ENCODE measurements at regions of chr14 and their contacts with region 1.

Region 1: DNA sequence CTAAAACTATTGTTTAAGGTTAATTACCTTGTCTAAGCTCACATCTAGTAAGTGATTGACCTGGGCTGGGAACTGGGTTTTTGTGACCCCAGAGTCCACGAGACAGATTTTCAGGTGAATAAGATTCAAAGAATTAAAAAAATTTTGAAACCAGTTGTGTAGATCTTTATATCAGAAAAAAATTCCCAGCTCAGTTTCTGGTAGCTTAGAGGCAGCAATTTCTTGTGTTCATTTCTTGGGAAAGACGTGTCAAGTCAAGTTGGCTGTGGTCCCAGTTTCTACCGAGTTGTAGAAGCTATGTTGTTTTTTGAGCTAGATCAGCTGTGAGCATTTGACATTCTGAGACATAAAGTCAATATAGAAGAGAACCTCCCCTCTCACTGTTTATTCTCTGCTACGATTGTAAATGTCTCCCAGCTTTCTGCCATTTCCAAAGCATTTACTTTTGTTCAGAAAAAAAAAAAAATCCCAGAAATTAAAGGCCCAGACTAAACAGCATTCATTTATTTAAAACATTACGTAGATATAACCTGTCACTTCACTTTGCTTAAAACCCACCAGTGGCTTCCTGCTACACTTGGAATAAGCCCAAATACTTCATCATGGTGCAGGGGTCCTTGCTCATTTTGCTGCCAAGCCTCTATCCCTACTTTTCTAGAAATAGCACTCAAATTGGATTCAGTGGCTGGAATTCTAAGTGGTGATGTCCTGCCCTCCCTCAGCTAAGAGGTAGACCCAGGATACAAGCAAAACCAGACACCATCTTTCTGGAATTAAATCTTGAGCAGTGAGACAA is 20.5 kb upstream of the PYGL start:
- DNase-seq: peak in 1 of 2 donors; percentile 46
- ATAC-seq: peak in 1 of 8 donors; percentile 11
- H3K4me3 ChIP-seq: no peak overlapping the region
- H3K27ac ChIP-seq: peak overlapping the region in 1 of 10 donors; percentile 14
- H3K4me1 ChIP-seq: peaks cover 0 to 48% (median 0%) of the 10 kb centered on the region in 9 donors
- H3K27me3 ChIP-seq: no peaks in the 10 kb centered on the region
- CTCF ChIP-seq: no peak

Region 2: GRCh38 chr14:50920482-50921230 is 44.1 kb before region 1 on chr14:
- intact Hi-C with region 1: no loop called
- DNase-seq: no peak
- ATAC-seq: peak in 2 of 8 donors; percentile 33 to 56
- H3K4me3 ChIP-seq: no peak overlapping the region
- H3K27ac ChIP-seq: peak overlapping the region in 4 of 10 donors; percentile 8 to 58 (median 34)
- H3K4me1 ChIP-seq: peaks cover 0 to 14% (median 0%) of the 10 kb centered on the region in 9 donors
- H3K27me3 ChIP-seq: no peaks in the 10 kb centered on the region
- CTCF ChIP-seq: no peak

Region 3: GRCh38 chr14:51094901-51095853 is 130.4 kb after region 1 on chr14 and contains the start of gene TRIM9:
- intact Hi-C with region 1: loop called in 1 of 10 experiments (anchors 10 kb)
- DNase-seq: peak; percentile 90 to 91
- ATAC-seq: peak; percentile 94 to 97 (median 96)
- H3K4me3 ChIP-seq: peak within 1 kb of the TSS; percentile 47 to 70 (median 62)
- H3K27ac ChIP-seq: peak within 1 kb of the TSS; percentile 3 to 82 (median 64)
- H3K4me1 ChIP-seq: peaks cover 7 to 27% (median 20%) of the 10 kb centered on the region in 9 donors
- H3K27me3 ChIP-seq: peaks cover 6 to 74% (median 58%) of the 10 kb centered on the region in 7 donors
- CTCF ChIP-seq: no peak
- total RNA-seq, gene TRIM9: 0.33 to 1.3 (median 0.68) TPM

Region 4: DNA sequence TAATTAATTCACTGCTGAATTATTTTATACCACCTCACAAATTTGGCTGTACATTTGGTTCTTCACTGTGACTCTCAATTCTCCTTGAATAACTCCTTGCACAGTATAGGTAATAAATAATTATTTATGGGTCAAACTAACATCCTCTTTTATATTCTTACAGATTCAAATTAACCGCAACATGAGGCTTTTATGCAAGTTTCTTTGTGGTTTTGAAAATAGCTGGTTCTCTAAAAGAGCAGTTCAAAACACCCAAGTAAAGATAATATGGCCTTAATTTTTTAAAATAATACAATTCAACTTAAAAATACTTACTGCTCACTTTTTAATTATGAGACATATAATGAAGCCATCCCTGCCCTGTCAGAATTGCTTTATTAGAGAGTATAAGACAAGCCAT is 143.0 kb after region 1 on chr14:
- intact Hi-C with region 1: no loop called
- DNase-seq: no peak
- ATAC-seq: no peak
- H3K4me3 ChIP-seq: no peak overlapping the region
- H3K27ac ChIP-seq: no peak overlapping the region
- H3K4me1 ChIP-seq: no peaks in the 10 kb centered on the region
- H3K27me3 ChIP-seq: peaks cover 0 to 26% (median 7%) of the 10 kb centered on the region in 7 donors
- CTCF ChIP-seq: no peak

Region 5: GRCh38 chr14:51202914-51203665 is 238.3 kb after region 1 on chr14:
- intact Hi-C with region 1: loop called in 1 of 10 experiments (anchors 10 kb)
- DNase-seq: no peak
- ATAC-seq: no peak
- H3K4me3 ChIP-seq: no peak overlapping the region
- H3K27ac ChIP-seq: no peak overlapping the region
- H3K4me1 ChIP-seq: no peaks in the 10 kb centered on the region
- H3K27me3 ChIP-seq: peaks cover 0 to 3% (median 0%) of the 10 kb centered on the region in 7 donors
- CTCF ChIP-seq: no peak

Measured in heart right ventricle (tissue), 16 donors.